Left ventricle myocardium inferior (tissue), 1 donor: ENCODE measurements at regions of chr6 and their contacts with region 1.

Region 1: DNA sequence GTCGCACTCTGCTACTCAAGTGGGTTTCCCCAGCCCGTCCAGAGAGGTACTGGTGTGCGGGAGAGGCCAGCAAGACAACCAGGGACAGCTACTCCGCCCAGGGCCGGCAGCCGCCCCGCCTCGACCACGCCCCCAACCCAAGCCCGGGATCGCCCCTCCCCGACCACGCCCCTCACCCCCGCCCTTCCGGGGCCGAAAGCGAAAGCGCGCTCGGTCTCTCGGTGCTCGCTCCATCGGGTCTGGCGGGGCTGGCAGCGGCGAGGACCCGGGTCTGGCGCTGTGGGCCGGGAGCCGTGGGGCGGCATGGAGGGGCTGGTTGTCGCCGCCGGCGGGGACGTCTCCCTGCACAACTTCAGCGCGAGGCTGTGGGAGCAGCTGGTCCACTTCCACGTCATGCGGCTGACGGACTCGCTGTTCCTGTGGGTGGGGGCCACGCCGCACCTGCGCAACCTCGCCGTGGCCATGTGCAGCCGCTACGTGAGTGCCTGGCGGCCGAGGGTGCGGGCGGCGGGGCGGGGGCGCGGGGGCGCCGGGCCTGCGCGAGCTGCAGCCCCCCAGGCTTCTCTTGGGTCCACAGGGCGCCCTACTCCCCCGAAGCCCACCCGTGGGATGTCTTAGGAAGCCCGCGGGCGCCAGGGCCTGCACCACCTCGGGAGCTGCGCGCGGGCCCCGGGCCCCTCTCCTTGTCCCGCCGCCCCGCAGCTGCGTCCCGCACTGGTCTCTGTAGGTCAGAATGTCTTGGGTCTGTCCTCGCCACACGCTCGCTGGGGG is at the start of gene PSMG4:
- DNase-seq: peak; percentile 96
- H3K4me3 ChIP-seq: peak within 1 kb of the TSS; percentile 93
- H3K27ac ChIP-seq: peak within 1 kb of the TSS; percentile 85
- H3K4me1 ChIP-seq: peaks cover 54% of the 10 kb centered on the region
- H3K27me3 ChIP-seq: no peaks in the 10 kb centered on the region
- CTCF ChIP-seq: no peak
- total RNA-seq, gene PSMG4: 11.2 TPM

Region 2: GRCh38 chr6:3124667-3125066 is 134.2 kb before region 1 on chr6:
- intact Hi-C with region 1: loop called (anchors 2 kb)
- DNase-seq: no peak
- H3K4me3 ChIP-seq: no peak overlapping the region
- H3K27ac ChIP-seq: no peak overlapping the region
- H3K4me1 ChIP-seq: peaks cover 8% of the 10 kb centered on the region
- H3K27me3 ChIP-seq: no peaks in the 10 kb centered on the region
- CTCF ChIP-seq: no peak